PC-3 (cell line): ENCODE measurements at regions of chr14 and their contacts with region 1.

Region 1: DNA sequence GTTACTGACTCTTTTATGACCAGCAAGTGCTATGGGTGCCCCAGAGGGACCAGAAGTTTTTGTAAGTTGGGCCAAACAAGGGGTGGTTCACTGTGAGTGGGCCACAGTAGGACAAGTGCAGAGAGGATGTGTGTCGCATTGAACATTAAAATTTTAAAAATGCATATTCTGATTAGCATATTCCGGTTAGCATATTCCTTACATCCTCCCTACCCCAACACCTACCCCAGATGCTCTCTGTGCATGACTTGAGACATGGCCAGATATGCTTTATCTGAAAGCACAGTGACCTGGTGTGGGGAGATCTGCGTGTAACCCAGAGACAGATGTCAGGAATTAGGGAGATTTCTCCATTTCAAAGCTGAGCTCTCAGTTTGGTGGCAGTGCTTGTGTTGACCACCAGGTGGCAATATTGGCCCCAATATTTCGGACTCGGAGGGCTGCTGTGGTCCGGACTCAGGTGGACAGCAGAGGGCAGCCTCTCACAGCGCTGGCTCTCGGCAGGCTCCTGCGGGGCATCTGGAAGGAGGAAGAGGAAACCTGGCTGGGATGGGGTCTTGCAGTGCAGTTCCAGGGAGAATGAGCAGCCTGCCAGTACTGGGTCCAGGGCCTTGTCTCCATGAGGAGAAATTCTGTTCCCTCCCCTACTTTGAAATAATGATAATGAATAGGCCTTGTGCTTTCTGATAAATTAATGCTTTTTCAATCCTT is 1.6 kb upstream of the CEBPE start:
- DNase-seq: peak; percentile 92
- ATAC-seq: peak; percentile 93
- H3K4me3 ChIP-seq: peak overlapping the region; percentile 25; the same call in 1 of the 2 replicates
- H3K27ac ChIP-seq: no peak overlapping the region; the same call in 1 of the 2 replicates
- H3K4me1 ChIP-seq: peaks cover 16% of the 10 kb centered on the region
- H3K27me3 ChIP-seq: no peaks in the 10 kb centered on the region
- CTCF ChIP-seq: peak; percentile 100

Region 2: DNA sequence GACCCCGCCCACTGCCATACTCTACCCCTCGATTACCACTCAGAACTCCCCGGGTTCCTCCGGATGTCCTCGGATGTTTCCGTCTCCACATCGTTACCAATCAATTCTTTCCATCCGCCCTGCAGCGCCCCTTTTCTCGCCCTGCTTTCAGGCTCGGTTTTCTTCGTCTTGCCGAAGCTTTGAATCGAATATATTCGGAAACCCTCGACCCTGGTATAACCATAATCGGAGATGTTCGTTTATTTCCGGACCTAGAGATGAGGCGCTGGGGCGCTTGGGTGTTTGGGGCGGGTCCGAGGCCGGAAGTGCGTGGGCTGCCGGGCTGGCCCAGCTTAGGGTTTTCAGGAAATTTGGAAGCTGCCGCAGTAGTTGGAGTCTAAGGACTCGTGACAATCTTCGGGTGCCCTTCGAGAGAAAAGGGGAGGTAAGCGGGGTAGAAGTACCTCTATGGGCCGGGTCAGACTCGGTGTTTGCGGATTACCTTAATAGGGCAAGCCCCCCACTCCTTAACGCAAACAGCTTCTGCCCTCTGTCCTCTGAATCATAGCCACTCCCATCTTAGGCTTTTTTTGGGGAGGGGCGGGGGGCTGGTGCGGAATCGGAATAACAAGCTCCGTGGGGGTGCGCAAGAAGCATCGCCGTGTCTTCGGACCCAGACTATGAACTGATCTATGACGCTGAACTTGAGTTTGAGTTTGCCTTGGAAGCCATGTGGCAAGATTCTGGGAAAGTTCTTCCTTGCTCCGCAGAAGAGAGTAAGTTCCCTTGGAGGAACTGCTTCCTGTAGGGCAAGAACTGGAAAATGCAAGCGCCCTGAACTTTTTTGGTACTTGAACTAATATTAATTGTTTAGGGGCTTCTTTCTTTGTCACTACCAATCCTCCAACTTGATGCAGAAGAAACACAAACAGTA is 25.2 kb before region 1 on chr14 and contains the start of gene C14orf119:
- CTCF ChIA-PET with region 1: interaction called, 16 read pairs
- POLR2A ChIA-PET with region 1: no interaction called
- intact Hi-C with region 1: no loop called
- DNase-seq: peak; percentile 99
- ATAC-seq: peak; percentile 88
- H3K4me3 ChIP-seq: peak within 1 kb of the TSS; percentile 95
- H3K27ac ChIP-seq: peak within 1 kb of the TSS; percentile 84
- H3K4me1 ChIP-seq: peaks cover 21% of the 10 kb centered on the region
- H3K27me3 ChIP-seq: no peaks in the 10 kb centered on the region
- CTCF ChIP-seq: no peak
- total RNA-seq, gene C14orf119: 26.7 and 49.6 TPM in 2 replicates

Region 3: GRCh38 chr14:23186913-23187654 is 66.4 kb after region 1 on chr14:
- CTCF ChIA-PET with region 1: interaction called, 84 read pairs
- POLR2A ChIA-PET with region 1: interaction called, 4 read pairs
- intact Hi-C with region 1: loop called (anchors 1 kb)
- DNase-seq: peak; percentile 76
- ATAC-seq: peak; percentile 57
- H3K4me3 ChIP-seq: no peak overlapping the region
- H3K27ac ChIP-seq: no peak overlapping the region
- H3K4me1 ChIP-seq: peaks cover 13% of the 10 kb centered on the region
- H3K27me3 ChIP-seq: no peaks in the 10 kb centered on the region
- CTCF ChIP-seq: peak; percentile 87

Region 4: GRCh38 chr14:23286020-23286905 is 165.6 kb after region 1 on chr14 and contains the start of gene HOMEZ:
- CTCF ChIA-PET with region 1: interaction called, 4 read pairs
- POLR2A ChIA-PET with region 1: no interaction called
- intact Hi-C with region 1: loop called (anchors 5 kb)
- DNase-seq: peak; percentile 98
- ATAC-seq: peak; percentile 98
- H3K4me3 ChIP-seq: peak within 1 kb of the TSS; percentile 100
- H3K27ac ChIP-seq: peak within 1 kb of the TSS; percentile 50
- H3K4me1 ChIP-seq: peaks cover 20% of the 10 kb centered on the region
- H3K27me3 ChIP-seq: no peaks in the 10 kb centered on the region
- CTCF ChIP-seq: no peak
- total RNA-seq, gene HOMEZ: 4.1 and 7.7 TPM in 2 replicates